ENCODE measurements at regions of chr17 and their contacts with region 1.

Region 1: GRCh38 chr17:3535253-3535995 is 22.2 kb downstream of the TRPV3 start:
- DNase-seq: peak; percentile 47 to 92 (median 84)

Region 2: GRCh38 chr17:3335884-3336283 is 199.5 kb before region 1 on chr17:
- intact Hi-C with region 1: no loop called
- DNase-seq: peak in 11 of 42 donors; percentile 2 to 39 (median 16)

Region 3: DNA sequence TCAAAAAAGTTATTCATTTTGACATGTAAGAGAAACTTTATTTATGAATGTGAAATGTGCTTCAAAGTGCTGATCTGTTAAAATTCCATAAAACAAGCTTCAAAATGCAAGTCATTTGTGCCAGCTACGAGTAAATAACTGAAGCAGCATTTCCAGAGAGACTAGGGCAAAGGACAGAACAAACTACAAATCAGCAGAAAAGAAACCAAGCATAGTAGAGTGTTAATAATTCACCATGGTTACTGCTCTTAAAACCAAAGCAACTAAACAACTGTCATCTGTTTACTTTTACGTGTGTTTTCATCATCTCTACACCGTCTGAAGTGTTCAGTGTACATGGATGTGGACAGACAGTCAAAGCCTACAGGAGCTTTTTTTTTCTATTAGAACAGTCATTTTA is 61.2 kb before region 1 on chr17:
- intact Hi-C with region 1: loop called (anchors 10 kb)
- DNase-seq: no peak

Region 4: DNA sequence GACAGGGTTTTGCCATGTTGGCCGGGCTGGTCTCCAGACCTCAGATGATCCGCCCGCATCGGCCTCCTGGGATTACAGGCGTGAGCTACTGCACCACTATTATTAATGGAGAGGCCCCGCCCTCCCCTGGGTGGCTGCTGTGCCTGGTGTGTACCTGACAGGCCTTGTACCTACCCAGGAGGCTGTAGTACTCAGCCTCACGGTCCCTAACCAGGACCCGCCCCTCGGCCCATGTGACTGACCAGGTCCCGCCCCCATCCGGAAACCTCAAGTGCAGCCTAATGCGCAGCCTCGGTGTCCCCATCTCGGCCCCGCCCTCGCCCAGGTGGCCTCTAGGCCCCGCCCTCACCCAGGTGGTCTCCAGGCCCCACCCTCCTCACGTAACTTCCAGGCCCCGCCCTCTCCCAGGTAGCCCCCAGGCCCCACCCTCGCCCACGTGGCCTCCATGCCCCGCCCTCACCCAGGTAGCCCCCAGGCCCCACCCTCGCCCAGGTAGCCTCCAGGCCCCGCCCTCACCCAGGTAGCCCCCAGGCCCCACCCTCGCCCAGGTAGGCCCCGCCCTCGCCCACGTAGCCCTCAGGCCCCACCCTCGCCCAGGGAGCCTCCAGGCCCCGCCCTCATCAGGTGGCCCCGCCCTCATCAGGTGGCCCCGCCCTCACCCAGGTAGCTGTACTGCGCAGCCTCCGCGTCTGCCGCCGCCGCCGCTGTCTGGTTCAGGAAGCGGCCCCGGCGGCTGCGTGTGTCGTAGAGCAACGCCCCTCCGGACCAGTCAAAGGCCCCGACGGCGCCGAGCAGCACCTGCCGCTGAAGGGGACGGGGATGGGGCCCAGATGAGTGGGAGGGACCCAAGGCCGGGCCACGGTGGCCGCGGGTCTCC is 219.3 kb after region 1 on chr17:
- intact Hi-C with region 1: no loop called
- DNase-seq: peak in 33 of 42 donors; percentile 17 to 77 (median 45)